AG04449 (cell line): ENCODE measurements at regions of chr15 and their contacts with region 1.

Region 1: GRCh38 chr15:40941528-40942336 is 11.5 kb upstream of the CHAC1 start:
- DNase-seq: no peak
- H3K4me3 ChIP-seq: peak overlapping the region; percentile 59
- CTCF ChIP-seq: peak; percentile 39

Region 2: DNA sequence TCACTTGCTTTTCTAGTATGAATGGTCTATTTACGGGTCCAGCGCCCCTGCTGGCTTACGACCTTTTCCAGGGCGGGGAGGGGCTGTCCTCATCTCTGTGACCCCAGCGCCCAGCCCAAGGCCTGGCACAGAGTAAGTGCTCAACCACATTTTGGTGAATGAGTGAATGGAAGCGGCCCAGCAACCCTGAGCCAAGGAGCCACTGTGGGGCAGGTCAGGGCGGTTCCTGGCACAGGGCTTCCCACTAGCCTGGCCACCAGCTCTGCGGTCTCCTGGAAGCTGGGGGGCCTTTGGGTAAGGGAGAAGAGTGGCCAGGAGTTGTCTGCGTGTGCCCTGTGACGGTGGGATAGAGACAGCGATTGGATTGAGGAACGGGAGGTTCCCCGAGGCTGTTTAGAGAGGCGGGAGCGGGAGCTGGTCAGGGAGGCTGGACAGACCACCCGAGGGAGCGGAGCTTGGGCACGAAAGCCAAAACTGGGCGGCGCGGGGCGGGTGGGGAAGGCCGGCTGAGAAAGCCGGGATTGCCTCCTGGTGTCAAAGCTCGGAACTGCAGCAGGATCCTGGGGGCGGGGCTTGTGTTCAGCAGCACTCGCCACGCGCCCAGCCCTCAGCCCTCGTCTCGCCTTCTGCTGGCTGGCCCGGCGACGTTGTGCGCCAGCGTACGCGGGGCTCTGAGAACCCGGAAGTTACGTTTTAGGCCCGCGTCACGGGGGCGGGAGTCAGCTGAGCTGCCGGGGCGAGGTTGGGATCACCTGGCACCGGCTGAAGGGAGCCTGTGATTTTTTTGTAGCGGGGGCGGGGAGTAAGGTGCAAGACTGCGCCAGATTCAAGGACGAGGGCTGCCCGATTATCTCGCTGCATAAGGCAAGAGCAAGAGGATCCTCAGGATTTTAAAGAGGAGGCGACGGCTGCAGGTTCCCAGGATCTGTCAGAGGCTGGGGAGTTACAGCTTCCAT is 47.7 kb before region 1 on chr15 and contains the start of gene VPS18:
- CTCF ChIA-PET with region 1: interaction called, 18 read pairs
- POLR2A ChIA-PET with region 1: no interaction called
- DNase-seq: peak; percentile 71
- H3K4me3 ChIP-seq: peak within 1 kb of the TSS; percentile 95
- CTCF ChIP-seq: peak; percentile 90

Region 3: GRCh38 chr15:40914486-40914885 is 27.2 kb before region 1 on chr15:
- CTCF ChIA-PET with region 1: interaction called, 35 read pairs
- POLR2A ChIA-PET with region 1: no interaction called
- DNase-seq: no peak
- H3K4me3 ChIP-seq: no peak overlapping the region
- CTCF ChIP-seq: no peak

Region 4: DNA sequence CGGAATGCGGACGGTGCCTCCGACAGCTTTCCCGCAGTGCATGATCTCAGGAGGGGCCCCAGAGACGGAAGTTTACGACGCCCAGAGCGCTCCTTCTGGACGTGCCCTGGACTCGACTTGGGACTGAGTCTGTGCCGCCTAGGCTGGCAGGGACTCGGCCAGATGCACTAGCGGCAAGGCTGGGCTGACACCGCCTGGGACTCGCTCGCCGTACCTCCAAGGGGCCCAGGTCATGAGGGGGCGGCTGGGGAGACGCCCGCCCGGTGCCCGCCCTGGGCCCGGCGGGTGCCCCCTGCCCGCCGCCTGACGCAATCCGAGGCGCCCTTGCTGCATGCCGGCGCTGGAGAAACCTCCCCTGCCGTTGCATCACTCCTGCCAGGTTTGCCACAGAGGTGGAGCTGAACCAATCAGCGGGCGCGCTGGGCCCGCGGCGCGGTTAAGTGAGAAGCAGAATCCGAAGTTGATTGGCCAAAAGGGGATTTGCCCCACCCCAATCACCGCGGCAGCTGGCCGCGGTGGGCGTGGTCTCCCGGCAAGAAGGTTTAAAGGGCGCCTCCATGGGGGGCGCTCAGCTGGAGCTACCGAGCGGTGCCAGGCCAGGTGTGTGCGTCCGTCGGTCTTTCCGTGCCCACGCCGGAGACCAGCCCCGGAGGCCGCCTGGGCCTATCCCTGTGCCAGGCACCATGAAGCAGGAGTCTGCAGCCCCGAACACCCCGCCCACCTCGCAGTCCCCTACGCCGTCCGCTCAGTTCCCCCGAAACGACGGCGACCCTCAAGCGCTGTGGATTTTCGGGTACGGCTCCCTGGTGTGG is 11.4 kb after region 1 on chr15 and contains the start of gene CHAC1:
- CTCF ChIA-PET with region 1: interaction called, 115 read pairs
- POLR2A ChIA-PET with region 1: interaction called, 54 read pairs
- DNase-seq: peak; percentile 86
- H3K4me3 ChIP-seq: peak within 1 kb of the TSS; percentile 96
- CTCF ChIP-seq: no peak

Region 5: DNA sequence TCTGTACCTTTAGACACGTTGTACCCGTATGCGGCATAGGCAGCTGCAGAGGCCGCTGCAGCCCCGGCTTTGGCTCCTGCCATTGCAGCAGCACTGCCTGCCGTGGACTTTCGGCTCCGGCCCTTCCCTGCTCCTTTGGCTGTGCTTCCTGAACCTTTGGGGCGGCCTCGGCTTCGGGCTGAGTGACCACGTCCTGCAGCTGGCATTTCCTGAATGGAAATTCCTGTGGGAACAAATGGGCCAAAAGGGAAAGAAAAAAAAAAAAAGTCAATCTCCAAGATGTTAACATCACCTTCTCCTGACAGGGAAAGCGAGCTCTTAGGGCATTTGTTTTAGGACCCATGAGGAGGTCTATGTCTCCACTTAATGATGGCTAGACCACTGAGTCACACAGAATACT is 41.1 kb after region 1 on chr15:
- CTCF ChIA-PET with region 1: interaction called, 17 read pairs
- POLR2A ChIA-PET with region 1: no interaction called
- DNase-seq: peak; percentile 29
- H3K4me3 ChIP-seq: no peak overlapping the region
- CTCF ChIP-seq: no peak

Region 6: GRCh38 chr15:41022487-41023090 is 80.9 kb after region 1 on chr15:
- CTCF ChIA-PET with region 1: interaction called, 179 read pairs
- POLR2A ChIA-PET with region 1: no interaction called
- DNase-seq: peak; percentile 16
- H3K4me3 ChIP-seq: no peak overlapping the region
- CTCF ChIP-seq: peak; percentile 77